ENCODE measurements at regions of chr10 and their contacts with region 1.

Region 1: GRCh38 chr10:241451-241850 is 106.2 kb downstream of the ZMYND11 start:
- DNase-seq: peak in 5 of 10 donors; percentile 23 to 56 (median 37)
- H3K4me3 ChIP-seq: no peak overlapping the region
- H3K27ac ChIP-seq: peak overlapping the region in 55 of 59 donors; percentile 2 to 85 (median 63)
- H3K27me3 ChIP-seq: no peaks in the 10 kb centered on the region
- CTCF ChIP-seq: no peak

Region 2: GRCh38 chr10:154348-154747 is 87.1 kb before region 1 on chr10:
- intact Hi-C with region 1: no loop called
- DNase-seq: no peak
- H3K4me3 ChIP-seq: no peak overlapping the region
- H3K27ac ChIP-seq: no peak overlapping the region
- H3K27me3 ChIP-seq: no peaks in the 10 kb centered on the region
- CTCF ChIP-seq: no peak

Region 3: GRCh38 chr10:387909-388660 is 146.6 kb after region 1 on chr10:
- intact Hi-C with region 1: loop called in 1 of 2 experiments (anchors 10 kb)
- DNase-seq: no peak
- H3K4me3 ChIP-seq: peak overlapping the region in 10 of 59 donors; percentile 2 to 43 (median 26)
- H3K27ac ChIP-seq: peak overlapping the region in 30 of 59 donors; percentile 3 to 75 (median 32)
- H3K27me3 ChIP-seq: no peaks in the 10 kb centered on the region
- CTCF ChIP-seq: no peak

Region 4: GRCh38 chr10:1323951-1324350 is 1082.5 kb after region 1 on chr10:
- intact Hi-C with region 1: no loop called
- DNase-seq: no peak
- H3K4me3 ChIP-seq: no peak overlapping the region
- H3K27ac ChIP-seq: peak overlapping the region in 22 of 59 donors; percentile 3 to 78 (median 54)
- H3K27me3 ChIP-seq: peaks cover 0 to 32% (median 2%) of the 10 kb centered on the region in 45 donors
- CTCF ChIP-seq: no peak